ENCODE measurements at regions of chr10 and their contacts with region 1.

Region 1: GRCh38 chr10:102641880-102642735 is 2.2 kb upstream of the TRIM8 start:
- DNase-seq: peak; percentile 85 to 99 (median 93)
- ATAC-seq: peak; percentile 84
- H3K4me3 ChIP-seq: peak overlapping the region; percentile 85
- H3K4me3 Mint-ChIP-seq: peak overlapping the region; percentile 90 to 97 (median 93)
- H3K27ac ChIP-seq: peak overlapping the region; percentile 98
- H3K27ac Mint-ChIP-seq: peak overlapping the region; percentile 84 to 98 (median 95)
- H3K4me1 ChIP-seq: peaks cover 8 to 13% of the 10 kb centered on the region in 2 donors
- H3K4me1 Mint-ChIP-seq: peaks cover 13 to 29% (median 19%) of the 10 kb centered on the region in 7 donors
- H3K27me3 ChIP-seq: no peaks in the 10 kb centered on the region
- H3K27me3 Mint-ChIP-seq: peaks cover 0 to 6% (median 0%) of the 10 kb centered on the region in 5 donors

Region 2: DNA sequence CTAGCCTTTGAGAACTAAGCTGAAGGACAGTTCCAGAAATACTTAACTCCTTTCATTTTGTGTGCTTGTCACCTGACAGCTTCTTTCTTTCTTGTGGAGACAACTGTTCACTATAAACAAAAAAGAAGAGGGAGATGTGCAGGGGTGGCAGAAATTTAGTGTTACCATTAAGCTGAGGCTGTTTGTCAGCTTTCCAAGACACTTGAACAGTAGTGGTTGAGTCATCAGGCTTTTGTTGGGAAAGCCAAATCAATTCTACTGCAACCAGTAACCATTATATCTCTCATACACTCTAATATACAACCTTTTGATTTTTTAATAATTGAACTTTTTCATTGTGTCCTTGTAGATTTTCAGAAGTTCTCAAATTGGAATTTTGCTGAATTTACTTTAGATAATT is 1129.4 kb before region 1 on chr10:
- CTCF ChIA-PET with region 1: no interaction called
- POLR2A ChIA-PET with region 1: no interaction called
- intact Hi-C with region 1: no loop called
- DNase-seq: no peak
- ATAC-seq: no peak
- H3K4me3 ChIP-seq: no peak overlapping the region
- H3K4me3 Mint-ChIP-seq: no peak overlapping the region
- H3K27ac ChIP-seq: no peak overlapping the region
- H3K27ac Mint-ChIP-seq: no peak overlapping the region
- H3K4me1 ChIP-seq: no peaks in the 10 kb centered on the region
- H3K4me1 Mint-ChIP-seq: peaks cover 0 to 18% (median 0%) of the 10 kb centered on the region in 7 donors
- H3K27me3 ChIP-seq: no peaks in the 10 kb centered on the region
- H3K27me3 Mint-ChIP-seq: peaks cover 0 to 2% (median 0%) of the 10 kb centered on the region in 5 donors

Region 3: GRCh38 chr10:101818119-101818871 is 823.8 kb before region 1 on chr10 and contains the start of gene OGA:
- CTCF ChIA-PET with region 1: no interaction called
- POLR2A ChIA-PET with region 1: no interaction called
- intact Hi-C with region 1: loop called (anchors 2 to 10 kb)
- DNase-seq: peak; percentile 90 to 100 (median 99)
- ATAC-seq: peak; percentile 97
- H3K4me3 ChIP-seq: peak within 1 kb of the TSS; percentile 81
- H3K4me3 Mint-ChIP-seq: peak within 1 kb of the TSS; percentile 95 to 100 (median 97)
- H3K27ac ChIP-seq: peak within 1 kb of the TSS; percentile 82
- H3K27ac Mint-ChIP-seq: peak within 1 kb of the TSS; percentile 95 to 99 (median 98)
- H3K4me1 ChIP-seq: peaks cover 19 to 25% of the 10 kb centered on the region in 2 donors
- H3K4me1 Mint-ChIP-seq: peaks cover 34 to 57% (median 50%) of the 10 kb centered on the region in 7 donors
- H3K27me3 ChIP-seq: no peaks in the 10 kb centered on the region
- H3K27me3 Mint-ChIP-seq: peaks cover 0 to 4% (median 0%) of the 10 kb centered on the region in 5 donors
- total RNA-seq, gene OGA: 154 to 338 (median 321) TPM

Region 4: DNA sequence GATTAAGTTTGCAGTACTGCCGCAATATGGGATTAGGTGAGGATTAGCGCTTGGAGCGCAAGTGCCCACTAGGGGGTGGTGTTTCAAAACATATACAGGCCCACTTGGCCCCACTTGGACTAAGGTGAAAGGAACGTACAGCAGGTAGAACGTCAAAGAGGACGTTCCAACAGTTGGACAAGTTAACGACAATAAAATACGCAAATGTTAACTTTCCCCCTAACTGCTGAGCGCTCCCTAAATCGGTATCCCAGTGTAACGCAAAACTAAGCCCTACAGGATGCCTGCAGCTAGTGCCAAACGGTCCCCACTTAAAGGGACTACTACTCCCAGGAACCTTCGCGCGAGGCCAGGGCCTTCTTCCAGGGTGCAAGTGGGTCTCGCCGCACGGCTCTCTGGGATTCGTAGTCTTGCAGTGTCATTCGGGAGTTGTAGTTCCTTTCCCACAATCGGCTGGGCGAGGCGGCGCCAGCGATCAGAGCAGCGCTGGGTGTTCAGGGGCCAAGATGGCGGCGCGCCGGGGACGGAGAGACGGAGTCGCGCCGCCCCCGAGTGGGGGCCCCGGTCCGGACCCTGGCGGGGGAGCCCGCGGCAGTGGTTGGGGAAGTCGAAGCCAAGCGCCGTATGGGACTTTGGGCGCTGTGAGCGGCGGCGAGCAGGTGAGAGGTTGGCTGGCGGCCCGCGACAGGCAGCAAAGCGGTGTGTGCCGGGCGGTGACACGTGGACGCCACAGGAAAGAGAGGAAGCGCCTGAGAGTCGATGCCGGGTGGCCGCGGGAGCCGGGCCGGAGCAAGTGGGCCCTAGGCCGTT is 509.3 kb before region 1 on chr10 and contains the start of gene PPRC1:
- CTCF ChIA-PET with region 1: no interaction called
- POLR2A ChIA-PET with region 1: interaction called, 4 read pairs
- intact Hi-C with region 1: loop called in 1 of 2 experiments (anchors 1 kb)
- DNase-seq: peak; percentile 88 to 98 (median 97)
- ATAC-seq: peak; percentile 97
- H3K4me3 ChIP-seq: peak within 1 kb of the TSS; percentile 80
- H3K4me3 Mint-ChIP-seq: peak within 1 kb of the TSS; percentile 90 to 99 (median 98)
- H3K27ac ChIP-seq: peak within 1 kb of the TSS; percentile 89
- H3K27ac Mint-ChIP-seq: peak within 1 kb of the TSS; percentile 89 to 99 (median 96)
- H3K4me1 ChIP-seq: peaks cover 15 to 26% of the 10 kb centered on the region in 2 donors
- H3K4me1 Mint-ChIP-seq: peaks cover 29 to 53% (median 47%) of the 10 kb centered on the region in 7 donors
- H3K27me3 ChIP-seq: no peaks in the 10 kb centered on the region
- H3K27me3 Mint-ChIP-seq: no peaks in the 10 kb centered on the region
- total RNA-seq, gene PPRC1: 33.7 to 56.5 (median 40.6) TPM

Region 5: DNA sequence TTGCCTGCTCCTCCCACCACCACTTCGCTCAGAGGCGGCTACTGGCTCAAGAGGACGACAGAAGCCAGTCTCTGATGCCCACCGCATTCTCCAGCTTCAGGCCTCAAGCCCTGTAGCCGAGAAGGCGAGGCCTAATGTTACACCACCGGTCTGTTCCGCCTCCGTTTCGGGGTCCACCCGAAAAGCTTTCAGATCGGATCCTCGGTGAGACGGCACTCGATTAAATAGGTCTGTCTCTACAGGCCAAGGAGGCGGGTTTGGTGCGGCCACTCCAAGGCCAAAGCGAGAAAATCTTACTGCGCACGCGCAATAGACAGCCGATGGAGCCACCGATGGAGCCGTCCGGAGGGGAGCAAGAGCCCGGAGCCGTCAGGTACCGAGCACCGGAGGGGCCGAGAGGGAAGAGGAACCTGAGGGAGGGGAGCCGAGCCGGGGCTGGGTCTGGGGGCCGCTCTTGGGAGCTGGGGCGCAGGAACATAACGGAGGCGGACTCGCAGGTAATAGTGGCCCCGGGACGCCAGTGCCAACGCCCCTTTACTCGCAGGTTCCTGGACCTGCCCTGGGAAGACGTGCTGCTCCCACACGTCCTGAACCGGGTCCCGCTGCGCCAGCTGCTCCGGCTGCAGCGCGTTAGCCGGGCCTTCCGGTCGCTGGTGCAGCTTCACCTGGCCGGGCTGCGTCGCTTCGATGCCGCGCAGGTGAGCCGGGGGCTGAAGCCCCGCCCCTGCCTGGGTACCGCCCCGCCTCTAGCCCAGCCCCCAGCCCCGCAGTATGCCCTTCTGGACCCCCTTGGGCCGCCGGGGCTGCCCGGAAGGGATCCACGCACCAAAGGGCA is 221.1 kb before region 1 on chr10 and contains the start of gene FBXL15:
- CTCF ChIA-PET with region 1: no interaction called
- POLR2A ChIA-PET with region 1: interaction called, 4 read pairs
- intact Hi-C with region 1: loop called in 1 of 2 experiments (anchors 2 kb)
- DNase-seq: peak; percentile 82 to 96 (median 90)
- ATAC-seq: peak; percentile 86
- H3K4me3 ChIP-seq: peak within 1 kb of the TSS; percentile 93
- H3K4me3 Mint-ChIP-seq: peak within 1 kb of the TSS; percentile 94 to 99 (median 98)
- H3K27ac ChIP-seq: peak within 1 kb of the TSS; percentile 75
- H3K27ac Mint-ChIP-seq: peak within 1 kb of the TSS; percentile 91 to 97 (median 95)
- H3K4me1 ChIP-seq: peaks cover 26 to 33% of the 10 kb centered on the region in 2 donors
- H3K4me1 Mint-ChIP-seq: peaks cover 17 to 46% (median 38%) of the 10 kb centered on the region in 7 donors
- H3K27me3 ChIP-seq: no peaks in the 10 kb centered on the region
- H3K27me3 Mint-ChIP-seq: peaks cover 17 to 26% (median 19%) of the 10 kb centered on the region in 5 donors
- total RNA-seq, gene FBXL15: 10.8 to 21.0 (median 14.1) TPM

Region 6: GRCh38 chr10:102660888-102661657 is 19.0 kb after region 1 on chr10:
- CTCF ChIA-PET with region 1: interaction called, 6 read pairs
- POLR2A ChIA-PET with region 1: interaction called, 56 read pairs
- intact Hi-C with region 1: loop called (anchors 1 kb)
- DNase-seq: peak in 7 of 9 donors; percentile 24 to 84 (median 44)
- ATAC-seq: peak; percentile 85
- H3K4me3 ChIP-seq: peak overlapping the region; percentile 35
- H3K4me3 Mint-ChIP-seq: peak overlapping the region; percentile 33 to 76 (median 64)
- H3K27ac ChIP-seq: peak overlapping the region; percentile 46
- H3K27ac Mint-ChIP-seq: peak overlapping the region in 7 of 9 donors; percentile 28 to 90 (median 79)
- H3K4me1 ChIP-seq: peaks cover 17 to 34% of the 10 kb centered on the region in 2 donors
- H3K4me1 Mint-ChIP-seq: peaks cover 27 to 48% (median 38%) of the 10 kb centered on the region in 7 donors
- H3K27me3 ChIP-seq: no peaks in the 10 kb centered on the region
- H3K27me3 Mint-ChIP-seq: no peaks in the 10 kb centered on the region

Region 7: DNA sequence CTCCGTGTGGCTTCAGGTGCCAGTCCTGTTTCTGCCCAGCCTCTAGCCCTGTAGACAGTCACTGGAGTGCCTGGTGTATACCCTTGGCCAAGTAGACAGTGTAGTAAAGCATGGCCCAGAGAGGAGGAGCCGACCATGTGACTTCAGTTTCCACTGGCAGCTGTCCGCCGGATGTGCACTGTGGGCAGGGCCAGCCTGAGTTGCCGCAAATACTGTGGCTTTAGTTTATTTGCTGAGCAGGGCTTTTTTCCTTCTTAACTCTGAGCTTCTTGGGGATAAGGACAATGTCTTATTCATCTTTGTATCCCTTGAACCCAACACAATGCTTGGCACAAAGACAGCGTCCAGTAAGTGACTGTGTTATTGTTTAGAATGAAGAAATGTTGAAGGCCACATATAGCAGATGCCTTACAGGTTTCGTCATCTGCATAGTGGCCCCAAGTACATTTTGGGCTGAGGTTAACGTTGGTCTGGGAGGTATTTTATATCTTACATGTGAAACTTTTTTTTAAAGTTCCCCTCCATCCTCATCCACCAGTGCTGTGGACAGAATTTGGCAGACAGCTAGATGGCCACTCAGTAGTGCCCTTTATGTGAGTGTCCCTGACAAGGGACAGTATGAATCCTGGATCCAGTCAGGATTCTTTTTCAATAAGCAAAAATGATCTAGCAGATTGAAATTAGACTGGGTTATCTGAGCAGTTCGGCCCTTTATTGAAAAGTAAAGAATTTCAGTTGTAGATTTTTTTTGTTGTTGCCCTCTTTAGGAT is 154.5 kb after region 1 on chr10:
- CTCF ChIA-PET with region 1: no interaction called
- POLR2A ChIA-PET with region 1: no interaction called
- intact Hi-C with region 1: loop called in 1 of 2 experiments (anchors 5 kb)
- DNase-seq: peak in 8 of 9 donors; percentile 9 to 55 (median 34)
- ATAC-seq: peak; percentile 95
- H3K4me3 ChIP-seq: peak overlapping the region; percentile 17
- H3K4me3 Mint-ChIP-seq: peak overlapping the region; percentile 33 to 66 (median 54)
- H3K27ac ChIP-seq: peak overlapping the region; percentile 1
- H3K27ac Mint-ChIP-seq: peak overlapping the region; percentile 28 to 79 (median 47)
- H3K4me1 ChIP-seq: peaks cover 13 to 24% of the 10 kb centered on the region in 2 donors
- H3K4me1 Mint-ChIP-seq: peaks cover 26 to 60% (median 52%) of the 10 kb centered on the region in 7 donors
- H3K27me3 ChIP-seq: no peaks in the 10 kb centered on the region
- H3K27me3 Mint-ChIP-seq: no peaks in the 10 kb centered on the region

Region 8: GRCh38 chr10:103111031-103111917 is 469.2 kb after region 1 on chr10:
- CTCF ChIA-PET with region 1: no interaction called
- POLR2A ChIA-PET with region 1: no interaction called
- intact Hi-C with region 1: no loop called
- DNase-seq: no peak
- ATAC-seq: no peak
- H3K4me3 ChIP-seq: no peak overlapping the region
- H3K4me3 Mint-ChIP-seq: no peak overlapping the region
- H3K27ac ChIP-seq: no peak overlapping the region
- H3K27ac Mint-ChIP-seq: peak overlapping the region in 3 of 9 donors; percentile 10 to 61 (median 60)
- H3K4me1 ChIP-seq: no peaks in the 10 kb centered on the region
- H3K4me1 Mint-ChIP-seq: peaks cover 0 to 12% (median 8%) of the 10 kb centered on the region in 7 donors
- H3K27me3 ChIP-seq: no peaks in the 10 kb centered on the region
- H3K27me3 Mint-ChIP-seq: no peaks in the 10 kb centered on the region

Region 9: DNA sequence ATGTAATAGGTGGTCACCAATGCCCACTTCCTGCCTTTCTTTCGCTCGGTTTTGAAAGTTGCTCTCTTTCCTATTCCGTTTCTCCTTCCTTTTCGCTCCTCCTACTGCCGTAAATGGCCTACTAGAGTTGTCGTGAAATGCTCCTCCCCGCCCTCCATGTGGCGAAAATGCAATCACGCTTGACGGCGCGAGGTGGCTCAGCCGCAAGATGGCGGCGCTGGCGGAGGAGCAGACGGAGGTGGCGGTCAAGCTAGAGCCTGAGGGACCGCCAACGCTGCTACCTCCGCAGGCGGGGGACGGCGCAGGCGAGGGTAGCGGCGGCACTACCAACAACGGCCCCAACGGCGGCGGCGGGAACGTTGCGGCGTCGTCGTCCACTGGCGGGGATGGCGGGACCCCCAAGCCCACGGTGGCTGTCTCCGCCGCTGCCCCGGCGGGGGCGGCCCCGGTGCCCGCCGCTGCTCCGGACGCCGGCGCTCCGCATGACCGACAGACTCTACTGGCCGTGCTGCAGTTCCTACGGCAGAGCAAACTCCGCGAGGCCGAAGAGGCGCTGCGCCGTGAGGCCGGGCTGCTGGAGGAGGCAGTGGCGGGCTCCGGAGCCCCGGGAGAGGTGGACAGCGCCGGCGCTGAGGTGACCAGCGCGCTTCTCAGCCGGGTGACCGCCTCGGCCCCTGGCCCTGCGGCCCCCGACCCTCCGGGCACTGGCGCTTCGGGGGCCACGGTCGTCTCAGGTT is 725.8 kb after region 1 on chr10 and contains the start of gene TAF5:
- CTCF ChIA-PET with region 1: no interaction called
- POLR2A ChIA-PET with region 1: no interaction called
- intact Hi-C with region 1: loop called in 1 of 2 experiments (anchors 1 kb)
- DNase-seq: peak; percentile 70 to 94 (median 90)
- ATAC-seq: peak; percentile 88
- H3K4me3 ChIP-seq: peak within 1 kb of the TSS; percentile 58
- H3K4me3 Mint-ChIP-seq: peak within 1 kb of the TSS; percentile 92 to 99 (median 96)
- H3K27ac ChIP-seq: peak within 1 kb of the TSS; percentile 77
- H3K27ac Mint-ChIP-seq: peak within 1 kb of the TSS; percentile 84 to 98 (median 94)
- H3K4me1 ChIP-seq: peaks cover 4 to 11% of the 10 kb centered on the region in 2 donors
- H3K4me1 Mint-ChIP-seq: peaks cover 0 to 35% (median 23%) of the 10 kb centered on the region in 7 donors
- H3K27me3 ChIP-seq: no peaks in the 10 kb centered on the region
- H3K27me3 Mint-ChIP-seq: no peaks in the 10 kb centered on the region
- total RNA-seq, gene TAF5: 4.7 to 8.9 (median 7.1) TPM